Endothelial cell of umbilical vein (primary cell): ENCODE measurements at regions of chr16 and their contacts with region 1.

Region 1: DNA sequence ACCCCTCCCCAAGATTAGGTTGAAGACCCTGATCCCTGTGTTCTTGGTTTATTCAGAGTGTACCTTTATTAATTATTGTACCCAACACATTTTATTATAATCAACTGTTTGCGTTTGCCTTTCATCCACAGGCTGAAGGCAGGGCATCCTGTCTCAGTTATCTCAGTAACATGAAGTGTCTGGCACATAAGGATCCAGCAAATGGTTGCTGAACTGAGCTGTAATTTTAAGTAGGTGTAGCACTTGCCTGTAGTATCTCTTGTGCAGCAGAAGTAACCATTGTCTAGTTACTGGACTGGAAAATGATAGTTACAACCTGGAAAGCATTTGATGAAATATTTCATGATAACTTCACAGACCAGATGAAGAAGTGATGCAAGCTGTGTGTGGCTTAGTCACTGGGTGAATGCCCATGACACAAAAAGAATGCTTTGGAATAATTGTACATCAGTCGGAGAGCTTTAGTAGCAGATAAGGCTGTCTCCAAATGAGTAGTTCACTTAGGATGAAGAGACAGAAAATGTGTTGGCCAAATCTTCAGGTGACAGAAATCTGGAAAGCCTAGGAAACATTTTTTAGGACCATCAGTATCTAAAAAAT is 56.6 kb downstream of the ESRP2 start:
- DNase-seq: no peak
- H3K4me3 ChIP-seq: no peak overlapping the region
- H3K27ac ChIP-seq: no peak overlapping the region
- H3K4me1 ChIP-seq: no peaks in the 10 kb centered on the region
- H3K27me3 ChIP-seq: no peaks in the 10 kb centered on the region
- CTCF ChIP-seq: no peak
- POLR2A ChIP-seq: no peak

Region 2: DNA sequence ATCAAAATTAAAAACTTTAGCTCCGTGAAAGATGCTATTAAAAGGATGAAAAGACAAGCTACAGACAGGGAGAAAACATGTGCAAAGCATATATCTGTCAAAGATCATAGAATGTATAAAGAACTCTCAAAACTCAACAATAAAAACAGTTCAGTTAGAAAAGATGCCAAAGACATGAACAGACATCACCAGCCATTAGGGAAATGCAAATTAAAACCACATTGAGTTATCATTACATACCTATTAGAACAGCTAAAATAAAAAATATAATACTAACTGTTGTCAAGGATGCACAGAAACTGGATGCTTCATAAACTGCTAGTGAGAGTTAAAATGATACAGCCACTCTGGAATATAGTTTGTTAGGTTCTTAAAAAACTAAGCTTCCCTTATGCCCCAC is 35.3 kb before region 1 on chr16:
- CTCF ChIA-PET with region 1: no interaction called
- POLR2A ChIA-PET with region 1: no interaction called
- dilution Hi-C with region 1: no loop called
- intact Hi-C with region 1: loop called (anchors 2 kb)
- DNase-seq: no peak
- H3K4me3 ChIP-seq: no peak overlapping the region
- H3K27ac ChIP-seq: no peak overlapping the region
- H3K4me1 ChIP-seq: peaks cover 8% of the 10 kb centered on the region
- H3K27me3 ChIP-seq: no peaks in the 10 kb centered on the region
- CTCF ChIP-seq: no peak
- POLR2A ChIP-seq: no peak

Region 3: DNA sequence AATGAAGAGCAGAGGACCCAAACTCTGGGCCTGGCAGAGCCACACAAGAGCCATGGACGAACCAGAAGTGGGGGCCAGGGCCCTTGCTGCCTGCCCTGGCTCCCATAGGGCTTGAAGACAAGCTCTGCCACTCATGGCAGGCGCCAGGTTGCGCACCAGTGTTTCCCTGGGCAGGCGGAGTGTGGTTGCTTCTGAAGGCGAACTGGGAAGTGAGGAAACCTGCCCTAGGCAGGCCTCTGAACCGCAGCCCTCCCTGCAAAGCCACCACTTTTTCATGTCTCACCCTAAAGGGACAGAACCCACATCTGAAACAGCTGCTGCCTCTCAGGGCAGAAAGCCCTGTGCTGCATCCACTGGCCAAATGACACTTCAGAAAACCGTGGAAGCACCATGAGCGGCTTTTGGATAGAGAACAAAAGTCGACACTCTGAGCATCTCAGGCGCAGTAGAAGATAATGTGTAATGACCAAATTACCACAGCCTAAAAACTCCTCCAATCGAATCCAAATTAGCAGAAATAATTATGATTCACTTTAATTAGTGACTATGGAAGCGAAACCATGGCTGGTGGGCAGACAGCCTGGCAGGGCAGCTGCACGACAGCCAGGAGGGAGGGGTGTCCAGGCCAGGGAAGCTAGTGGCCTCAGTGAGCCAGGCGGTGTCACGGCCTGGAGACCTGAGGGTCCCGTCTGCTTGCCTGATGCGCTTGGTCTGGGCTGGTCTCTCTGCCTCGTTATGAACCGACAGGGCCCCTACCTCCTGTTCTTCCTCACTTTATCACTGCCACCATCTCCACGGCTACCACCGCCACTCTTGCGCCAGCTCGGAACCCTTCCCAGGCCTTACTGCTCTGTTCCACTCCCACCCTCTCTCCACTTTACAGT is 190.6 kb after region 1 on chr16:
- CTCF ChIA-PET with region 1: no interaction called
- POLR2A ChIA-PET with region 1: no interaction called
- dilution Hi-C with region 1: no loop called
- intact Hi-C with region 1: no loop called
- DNase-seq: no peak
- H3K4me3 ChIP-seq: no peak overlapping the region
- H3K27ac ChIP-seq: no peak overlapping the region
- H3K4me1 ChIP-seq: no peaks in the 10 kb centered on the region
- H3K27me3 ChIP-seq: no peaks in the 10 kb centered on the region
- CTCF ChIP-seq: no peak
- POLR2A ChIP-seq: no peak